Posterior vena cava (tissue), 2 donors: ENCODE measurements at regions of chr17 and their contacts with region 1.

Region 1: GRCh38 chr17:50101346-50102163 is 6.4 kb downstream of the PDK2 start:
- DNase-seq: no peak

Region 2: GRCh38 chr17:50064258-50065001 is 37.1 kb before region 1 on chr17:
- intact Hi-C with region 1: no loop called
- DNase-seq: no peak

Region 3: DNA sequence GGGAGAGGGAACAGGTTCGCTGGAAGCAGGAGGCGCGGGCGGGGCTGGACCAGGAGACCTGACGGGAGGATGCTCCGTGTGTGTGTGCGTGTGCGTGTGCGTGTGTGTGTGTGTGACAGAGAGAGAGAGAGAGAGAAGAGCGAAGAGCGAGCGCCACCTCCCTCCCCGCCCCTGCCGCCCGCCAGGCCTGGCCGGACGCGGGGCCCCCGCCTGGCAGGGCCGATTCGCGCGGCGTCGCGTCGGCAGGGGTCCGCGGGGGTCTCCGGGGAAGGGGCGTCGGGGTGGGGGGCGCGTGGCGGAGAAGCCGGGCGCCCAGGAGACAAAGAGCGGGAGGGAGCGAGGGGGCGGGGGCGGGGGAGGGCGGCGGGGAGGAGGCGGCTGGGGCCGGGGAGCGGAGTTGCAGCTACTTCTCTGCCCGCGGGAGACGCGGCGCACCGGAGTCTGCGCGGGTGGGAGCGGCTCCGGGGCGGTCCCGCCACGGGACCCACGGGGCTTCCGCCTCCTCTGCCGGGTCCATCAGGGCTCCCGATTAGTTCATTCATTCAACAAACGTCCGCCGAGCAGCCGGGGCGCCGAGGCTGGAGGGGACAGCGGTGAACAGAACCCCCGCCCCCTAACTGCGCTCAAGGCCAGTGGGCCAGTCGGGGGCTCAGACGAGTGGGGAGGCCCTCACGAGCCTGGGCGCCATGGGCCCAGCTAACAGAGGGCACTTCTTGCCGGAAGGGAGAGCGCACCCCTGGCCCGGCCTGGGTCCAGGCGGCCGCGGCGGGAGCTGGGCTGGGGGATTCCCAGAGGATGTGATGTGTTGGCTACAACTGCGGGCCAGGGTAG is 28.4 kb after region 1 on chr17 and contains the start of gene SAMD14:
- intact Hi-C with region 1: loop called in 1 of 2 experiments (anchors 2 kb)
- DNase-seq: peak; percentile 86
- total RNA-seq, gene SAMD14: 6.6 to 6.7 TPM

Region 4: DNA sequence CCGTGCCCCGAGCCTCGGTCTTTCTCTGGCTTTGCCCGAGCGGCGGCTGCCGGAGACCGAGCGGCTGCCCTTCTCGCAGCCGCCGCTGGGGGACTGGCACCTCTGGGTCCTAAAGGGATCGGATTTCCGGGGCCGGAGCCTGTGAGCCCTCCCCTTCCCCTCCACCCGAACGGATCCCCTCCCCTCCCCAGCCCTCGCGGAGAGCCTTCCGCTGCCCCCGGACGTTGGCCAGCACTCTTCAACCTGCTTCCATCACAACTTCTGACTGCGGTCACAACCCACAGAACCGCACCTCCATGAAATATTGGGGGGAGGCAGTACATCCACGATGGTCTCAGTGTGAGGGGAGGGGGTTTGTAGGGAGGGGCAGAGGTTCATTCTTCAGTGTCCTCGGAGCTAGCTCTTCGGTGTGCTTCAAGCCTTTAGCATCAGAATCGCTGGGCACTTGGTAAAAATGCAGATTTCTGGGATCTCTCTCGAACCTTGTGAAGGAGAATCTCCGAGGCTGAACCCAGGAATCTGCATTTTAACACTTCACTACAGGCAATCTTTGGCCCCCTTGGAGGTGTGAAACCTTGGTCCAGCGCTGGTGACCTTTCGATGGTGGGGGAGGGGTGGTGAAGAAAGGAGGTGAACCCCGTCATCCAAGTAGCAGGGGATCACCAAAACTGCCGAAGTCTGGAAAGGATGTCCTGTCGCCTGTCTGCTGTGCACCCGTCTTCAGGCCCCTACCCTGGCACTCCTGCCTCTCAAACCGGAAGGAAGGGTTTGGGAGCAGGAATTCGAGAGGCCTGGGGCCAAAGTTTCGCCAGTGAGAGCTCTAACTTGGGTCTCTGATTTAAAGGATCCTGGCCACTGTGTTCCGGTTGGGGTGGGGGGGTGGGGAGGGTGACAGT is 49.7 kb after region 1 on chr17:
- intact Hi-C with region 1: no loop called
- DNase-seq: peak; percentile 97